ENCODE measurements at regions of chr5 and their contacts with region 1.

Region 1: DNA sequence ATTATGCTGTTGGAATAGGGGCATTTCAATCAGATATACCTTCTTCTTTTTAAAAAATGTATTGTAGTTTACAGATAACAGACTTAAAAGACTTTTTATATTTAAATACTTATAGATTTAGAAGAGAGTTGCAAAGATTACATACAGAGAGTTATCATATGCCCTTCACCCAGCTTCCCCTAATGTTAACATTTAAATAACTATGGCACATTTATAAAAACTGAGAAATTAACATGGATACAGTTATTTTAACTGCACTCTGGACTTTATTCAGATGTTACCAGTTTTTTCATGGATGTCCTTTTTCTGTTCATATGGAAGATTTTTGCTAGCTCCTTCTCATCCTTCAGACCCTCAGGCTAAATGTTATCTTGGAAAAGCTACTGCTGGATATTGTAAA is 123.2 kb downstream of the DOCK2 start:
- DNase-seq: no peak
- H3K4me3 ChIP-seq: no peak overlapping the region
- CTCF ChIP-seq: no peak

Region 2: GRCh38 chr5:169742771-169743296 is 17.4 kb before region 1 on chr5:
- CTCF ChIA-PET with region 1: interaction called, 10 read pairs
- POLR2A ChIA-PET with region 1: no interaction called
- DNase-seq: peak; percentile 79
- H3K4me3 ChIP-seq: no peak overlapping the region
- CTCF ChIP-seq: no peak

Measured in AG04449 (cell line).